Activated naive CD4-positive, alpha-beta T cell treated with anti-CD3 and anti-CD28 coated beads, Interleukin-2, amount 10 ng/mL, durations not matched to agents 7 days and 5 days (primary cell): ENCODE measurements at regions of chrX and their contacts with region 1.

Region 1: GRCh38 chrX:23901805-23902204 is 5.9 kb downstream of the APOO start:
- DNase-seq: peak; percentile 55
- H3K4me3 Mint-ChIP-seq: no peak overlapping the region
- H3K27ac Mint-ChIP-seq: no peak overlapping the region
- H3K4me1 Mint-ChIP-seq: peaks cover 11% of the 10 kb centered on the region
- H3K27me3 Mint-ChIP-seq: no peaks in the 10 kb centered on the region

Region 2: GRCh38 chrX:23694606-23695005 is 207.2 kb before region 1 on chrX:
- CTCF ChIA-PET with region 1: interaction called, 69 read pairs
- DNase-seq: peak; percentile 57
- H3K4me3 Mint-ChIP-seq: no peak overlapping the region
- H3K27ac Mint-ChIP-seq: no peak overlapping the region
- H3K4me1 Mint-ChIP-seq: peaks cover 2% of the 10 kb centered on the region
- H3K27me3 Mint-ChIP-seq: no peaks in the 10 kb centered on the region

Region 3: DNA sequence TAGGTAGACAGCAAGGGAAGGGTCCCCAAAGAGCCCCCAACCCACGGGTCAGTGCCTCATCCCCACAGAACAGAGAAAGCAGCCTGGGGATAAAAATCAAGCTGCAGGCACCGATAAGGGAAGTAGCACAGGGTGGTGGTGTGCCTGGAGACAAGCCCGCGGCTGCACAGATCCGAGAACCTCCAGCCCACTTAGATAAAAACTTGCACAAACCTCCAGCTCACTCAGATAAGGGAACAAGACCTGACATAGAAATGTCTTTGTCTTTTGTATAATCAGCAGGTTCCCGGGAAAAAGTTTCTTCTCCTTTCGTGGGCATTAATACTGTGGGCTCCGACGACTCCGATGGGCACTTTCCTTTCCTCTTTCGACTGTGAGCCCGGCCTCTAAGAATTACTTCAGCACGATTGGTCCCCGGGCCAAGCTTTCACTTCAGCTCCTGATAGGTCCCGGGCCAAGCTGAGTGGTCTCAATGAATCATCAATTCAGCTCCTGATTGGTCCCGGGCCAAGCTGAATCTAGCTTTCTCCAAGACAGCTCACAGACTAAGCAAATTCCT is 202.1 kb before region 1 on chrX:
- CTCF ChIA-PET with region 1: interaction called, 69 read pairs
- DNase-seq: peak; percentile 21
- H3K4me3 Mint-ChIP-seq: no peak overlapping the region
- H3K27ac Mint-ChIP-seq: no peak overlapping the region
- H3K4me1 Mint-ChIP-seq: peaks cover 6% of the 10 kb centered on the region
- H3K27me3 Mint-ChIP-seq: no peaks in the 10 kb centered on the region

Region 4: DNA sequence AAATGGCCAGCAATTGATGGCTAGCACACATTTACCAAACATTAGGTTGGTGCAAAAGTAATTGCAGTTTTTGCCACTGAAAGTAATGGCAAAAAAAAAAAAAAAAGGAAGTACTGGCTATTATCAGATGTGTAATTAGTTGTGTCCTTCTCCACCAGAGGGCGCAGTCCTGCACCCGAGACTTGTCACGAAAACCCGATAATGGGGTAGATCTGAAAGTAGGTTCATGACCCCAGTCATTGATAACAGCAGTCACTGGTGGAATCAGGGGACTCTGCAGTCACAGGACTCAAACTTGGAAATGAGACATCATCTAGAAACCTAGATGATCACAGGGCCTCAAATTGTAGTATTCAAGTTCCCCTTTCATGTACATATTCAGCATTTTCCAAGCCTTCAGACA is 145.6 kb before region 1 on chrX:
- CTCF ChIA-PET with region 1: interaction called, 20 read pairs
- DNase-seq: peak; percentile 74
- H3K4me3 Mint-ChIP-seq: no peak overlapping the region
- H3K27ac Mint-ChIP-seq: no peak overlapping the region
- H3K4me1 Mint-ChIP-seq: peaks cover 4% of the 10 kb centered on the region
- H3K27me3 Mint-ChIP-seq: no peaks in the 10 kb centered on the region

Region 5: GRCh38 chrX:23782863-23783568 is 118.8 kb before region 1 on chrX and contains the start of gene SAT1:
- CTCF ChIA-PET with region 1: interaction called, 38 read pairs
- DNase-seq: peak; percentile 94
- H3K4me3 Mint-ChIP-seq: peak within 1 kb of the TSS; percentile 94
- H3K27ac Mint-ChIP-seq: peak within 1 kb of the TSS; percentile 97
- H3K4me1 Mint-ChIP-seq: peaks cover 39% of the 10 kb centered on the region
- H3K27me3 Mint-ChIP-seq: no peaks in the 10 kb centered on the region

Region 6: DNA sequence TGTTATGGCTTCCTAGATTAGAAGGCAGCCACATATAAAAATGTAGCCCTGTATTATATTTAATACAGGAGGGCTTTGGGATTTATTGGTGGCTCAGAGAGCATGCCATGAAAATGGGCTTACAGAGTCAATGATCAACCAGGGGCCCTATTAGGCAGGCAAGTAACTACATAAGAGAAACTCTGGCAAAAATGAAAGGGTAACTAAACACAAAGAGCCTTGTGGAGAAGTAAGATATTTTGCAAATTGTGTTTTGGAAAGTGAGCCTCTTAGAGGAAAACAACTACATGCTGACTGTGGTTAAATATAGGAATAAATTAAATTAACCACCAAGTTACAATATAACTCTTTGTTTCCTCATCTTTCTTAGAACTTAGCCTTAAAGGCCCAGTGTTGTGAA is 113.3 kb before region 1 on chrX:
- CTCF ChIA-PET with region 1: interaction called, 38 read pairs
- DNase-seq: no peak
- H3K4me3 Mint-ChIP-seq: no peak overlapping the region
- H3K27ac Mint-ChIP-seq: no peak overlapping the region
- H3K4me1 Mint-ChIP-seq: peaks cover 20% of the 10 kb centered on the region
- H3K27me3 Mint-ChIP-seq: no peaks in the 10 kb centered on the region